Transverse colon (tissue), 4 donors: ENCODE measurements at regions of chr15 and their contacts with region 1.

Region 1: GRCh38 chr15:92226014-92226612 is 167.6 kb upstream of the ST8SIA2 start:
- DNase-seq: no peak
- H3K4me3 ChIP-seq: no peak overlapping the region
- H3K27ac ChIP-seq: no peak overlapping the region
- H3K4me1 ChIP-seq: no peaks in the 10 kb centered on the region
- H3K27me3 ChIP-seq: no peaks in the 10 kb centered on the region
- CTCF ChIP-seq: peak; percentile 16 to 46 (median 42)
- EP300 ChIP-seq: no peak
- POLR2A ChIP-seq: no peak

Region 2: GRCh38 chr15:92714477-92715401 is 488.6 kb after region 1 on chr15:
- in situ Hi-C with region 1: loop called in 1 of 4 experiments (anchors 25 kb)
- intact Hi-C with region 1: no loop called
- DNase-seq: peak; percentile 65
- H3K4me3 ChIP-seq: peak overlapping the region; percentile 24 to 62 (median 36)
- H3K27ac ChIP-seq: peak overlapping the region; percentile 73 to 82 (median 76)
- H3K4me1 ChIP-seq: peaks cover 0 to 4% (median 2%) of the 10 kb centered on the region in 4 donors
- H3K27me3 ChIP-seq: no peaks in the 10 kb centered on the region
- CTCF ChIP-seq: peak; percentile 81 to 91 (median 83)
- EP300 ChIP-seq: no peak
- POLR2A ChIP-seq: peak; percentile 21